ENCODE measurements at regions of chr14 and their contacts with region 1.

Region 1: DNA sequence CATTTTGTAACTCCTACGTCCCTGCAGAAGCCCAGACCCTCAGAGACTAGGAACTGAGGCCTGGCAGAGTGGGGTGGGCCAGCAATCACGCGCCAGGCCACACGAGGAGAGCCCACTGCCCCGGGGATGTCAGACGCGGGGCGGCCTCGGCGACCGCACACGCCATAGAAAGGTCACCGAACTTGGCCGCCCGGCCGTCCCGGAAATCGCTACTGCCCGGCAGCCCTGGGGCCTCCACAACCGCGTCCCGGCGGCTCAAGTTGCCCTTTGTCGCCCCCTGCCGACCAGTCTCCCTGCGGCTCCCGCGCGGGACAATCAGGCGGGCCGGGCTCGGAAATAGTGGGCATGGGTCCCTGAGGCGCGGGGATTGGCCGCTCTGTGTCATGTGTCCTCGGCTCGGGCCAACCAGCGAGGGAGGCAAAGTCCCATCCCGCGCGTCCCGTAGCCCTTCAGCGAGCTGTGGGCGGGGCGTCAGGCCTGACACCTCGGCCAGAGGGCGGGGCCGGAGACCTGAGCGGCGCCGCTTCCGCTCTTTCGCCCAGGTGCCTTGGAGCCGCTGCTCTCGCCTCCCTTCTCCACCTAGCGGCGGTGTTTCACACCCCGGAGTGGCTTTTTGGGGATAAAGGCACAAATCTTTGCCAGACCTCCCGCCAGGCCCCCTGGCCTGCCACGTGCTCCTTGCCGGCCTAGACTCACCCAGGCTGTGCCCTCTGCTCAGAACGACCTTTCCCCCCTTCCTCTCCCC is 33.4 kb upstream of the DEGS2 start:
- DNase-seq: peak; percentile 100
- ATAC-seq: peak; percentile 98
- H3K4me3 ChIP-seq: peak overlapping the region; percentile 3 to 63 (median 52)
- H3K4me3 Mint-ChIP-seq: peak overlapping the region; percentile 76
- H3K27ac ChIP-seq: peak overlapping the region; percentile 88
- H3K27ac Mint-ChIP-seq: peak overlapping the region; percentile 96
- H3K4me1 ChIP-seq: peaks cover 10 to 14% of the 10 kb centered on the region in 2 donors
- H3K4me1 Mint-ChIP-seq: peaks cover 9% of the 10 kb centered on the region
- H3K27me3 ChIP-seq: no peaks in the 10 kb centered on the region
- H3K27me3 Mint-ChIP-seq: no peaks in the 10 kb centered on the region
- CTCF ChIP-seq: peak; percentile 94

Region 2: DNA sequence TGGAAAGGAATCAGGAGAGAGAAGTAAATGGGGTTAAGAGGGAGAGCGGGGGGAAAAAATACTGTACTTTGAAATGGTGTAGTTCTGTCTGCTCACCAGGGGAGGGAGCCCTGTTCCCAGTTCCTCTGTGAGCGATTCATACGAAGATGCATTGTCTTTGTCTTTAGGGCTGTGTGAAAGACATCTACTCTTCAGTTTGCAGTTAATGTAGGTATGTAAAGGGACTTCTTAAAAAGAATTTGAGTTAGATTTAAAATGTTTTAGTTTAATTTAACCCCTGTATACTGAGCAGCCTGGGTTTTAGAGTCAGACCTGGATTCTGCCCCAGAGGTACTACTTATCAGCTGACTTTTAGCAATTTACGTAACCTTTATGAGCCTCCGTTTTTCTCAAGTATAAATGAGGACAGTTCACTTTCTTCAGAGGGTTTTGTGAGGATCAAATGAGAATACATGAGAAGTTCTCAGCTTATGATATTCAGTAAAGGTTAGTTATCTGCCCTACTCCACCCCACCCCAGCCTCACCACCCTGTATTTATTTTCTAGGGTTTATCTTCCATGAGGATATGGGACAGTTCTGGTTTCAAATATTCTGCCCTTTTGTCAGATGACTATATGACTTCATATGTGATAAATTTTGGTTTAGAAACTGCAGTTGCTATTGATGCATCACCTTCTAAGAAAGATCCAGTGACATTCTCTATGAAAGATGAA is 210.2 kb before region 1 on chr14:
- CTCF ChIA-PET with region 1: interaction called, 85 read pairs
- POLR2A ChIA-PET with region 1: interaction called, 6 read pairs
- intact Hi-C with region 1: loop called (anchors 1 kb)
- DNase-seq: peak; percentile 74
- ATAC-seq: peak; percentile 99
- H3K4me3 ChIP-seq: no peak overlapping the region
- H3K4me3 Mint-ChIP-seq: no peak overlapping the region
- H3K27ac ChIP-seq: no peak overlapping the region
- H3K27ac Mint-ChIP-seq: no peak overlapping the region
- H3K4me1 ChIP-seq: no peaks in the 10 kb centered on the region
- H3K4me1 Mint-ChIP-seq: no peaks in the 10 kb centered on the region
- H3K27me3 ChIP-seq: no peaks in the 10 kb centered on the region
- H3K27me3 Mint-ChIP-seq: no peaks in the 10 kb centered on the region
- CTCF ChIP-seq: peak; percentile 96

Region 3: DNA sequence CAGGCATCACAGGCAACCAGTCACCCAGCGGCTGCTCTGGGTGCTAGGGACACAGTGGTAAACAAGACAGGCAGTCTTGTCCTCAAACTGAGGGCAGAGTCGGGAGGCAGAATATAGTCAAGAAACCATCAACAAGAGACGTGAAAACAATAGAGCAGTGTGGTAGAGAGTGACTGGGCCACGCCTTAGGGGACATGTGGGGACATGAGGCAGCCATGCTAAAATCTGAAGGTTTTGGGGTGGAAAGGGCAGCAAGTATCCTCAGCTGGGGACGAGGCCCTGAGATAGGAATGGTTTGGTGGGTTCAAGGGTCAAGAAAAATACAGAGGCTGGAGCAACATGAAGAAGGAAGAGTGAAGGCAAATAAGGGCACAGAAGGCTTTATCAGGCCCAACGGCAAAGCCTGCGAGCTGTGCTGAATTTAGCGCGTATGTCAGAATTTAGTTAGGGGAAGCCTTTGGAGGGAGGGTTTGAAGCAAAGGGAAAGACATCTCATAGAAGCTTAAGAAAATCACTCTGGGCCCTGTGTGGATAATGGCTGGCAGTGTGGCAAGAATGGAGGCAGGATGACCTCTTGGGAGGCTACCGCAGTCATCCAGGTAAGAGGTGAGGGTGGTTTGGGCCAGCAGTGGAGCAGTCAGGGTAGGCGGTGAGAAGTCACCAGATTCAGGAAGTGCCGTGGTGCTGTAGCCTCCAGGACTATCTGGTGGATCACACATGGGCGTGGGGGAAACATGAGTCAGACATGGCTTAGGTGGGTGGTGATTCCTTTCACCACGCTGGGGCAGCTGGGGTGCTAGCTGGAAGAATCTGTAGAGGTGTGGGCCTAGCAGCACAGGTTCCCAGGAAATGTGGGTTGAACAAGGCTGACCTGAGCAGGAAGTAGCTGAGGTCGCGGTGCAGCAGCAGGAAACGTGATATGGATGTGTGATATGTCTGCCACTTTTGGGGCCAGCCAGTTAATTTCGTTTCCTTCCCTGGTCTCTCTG is 124.6 kb before region 1 on chr14:
- CTCF ChIA-PET with region 1: interaction called, 58 read pairs
- POLR2A ChIA-PET with region 1: interaction called, 4 read pairs
- intact Hi-C with region 1: loop called (anchors 2 kb)
- DNase-seq: peak; percentile 80
- ATAC-seq: peak; percentile 41
- H3K4me3 ChIP-seq: peak overlapping the region; percentile 61 to 92 (median 69)
- H3K4me3 Mint-ChIP-seq: peak overlapping the region; percentile 100
- H3K27ac ChIP-seq: peak overlapping the region; percentile 79 to 87
- H3K27ac Mint-ChIP-seq: peak overlapping the region; percentile 98
- H3K4me1 ChIP-seq: peaks cover 77 to 86% of the 10 kb centered on the region in 2 donors
- H3K4me1 Mint-ChIP-seq: peaks cover 93% of the 10 kb centered on the region
- H3K27me3 ChIP-seq: no peaks in the 10 kb centered on the region
- H3K27me3 Mint-ChIP-seq: no peaks in the 10 kb centered on the region
- CTCF ChIP-seq: no peak

Region 4: GRCh38 chr14:100147181-100147631 is 45.6 kb before region 1 on chr14:
- CTCF ChIA-PET with region 1: interaction called, 32 read pairs
- POLR2A ChIA-PET with region 1: no interaction called
- intact Hi-C with region 1: loop called (anchors 1 kb)
- DNase-seq: peak; percentile 71
- ATAC-seq: peak; percentile 74
- H3K4me3 ChIP-seq: peak overlapping the region in 1 of 5 experiments; percentile 25
- H3K4me3 Mint-ChIP-seq: peak overlapping the region; percentile 78
- H3K27ac ChIP-seq: no peak overlapping the region
- H3K27ac Mint-ChIP-seq: peak overlapping the region; percentile 92
- H3K4me1 ChIP-seq: peaks cover 22 to 24% of the 10 kb centered on the region in 2 donors
- H3K4me1 Mint-ChIP-seq: peaks cover 27% of the 10 kb centered on the region
- H3K27me3 ChIP-seq: no peaks in the 10 kb centered on the region
- H3K27me3 Mint-ChIP-seq: no peaks in the 10 kb centered on the region
- CTCF ChIP-seq: no peak

Region 5: GRCh38 chr14:100165831-100166440 is 26.9 kb before region 1 on chr14:
- CTCF ChIA-PET with region 1: interaction called, 11 read pairs
- POLR2A ChIA-PET with region 1: interaction called, 4 read pairs
- intact Hi-C with region 1: loop called (anchors 1 kb)
- DNase-seq: no peak
- ATAC-seq: peak; percentile 48
- H3K4me3 ChIP-seq: peak overlapping the region in 4 of 5 experiments; percentile 37 to 83 (median 57)
- H3K4me3 Mint-ChIP-seq: peak overlapping the region; percentile 90
- H3K27ac ChIP-seq: peak overlapping the region in 1 of 2 donors; percentile 30
- H3K27ac Mint-ChIP-seq: peak overlapping the region; percentile 92
- H3K4me1 ChIP-seq: peaks cover 9 to 25% of the 10 kb centered on the region in 2 donors
- H3K4me1 Mint-ChIP-seq: peaks cover 11% of the 10 kb centered on the region
- H3K27me3 ChIP-seq: no peaks in the 10 kb centered on the region
- H3K27me3 Mint-ChIP-seq: peaks cover 3% of the 10 kb centered on the region
- CTCF ChIP-seq: no peak

Region 6: GRCh38 chr14:100221533-100222223 is 28.8 kb after region 1 on chr14:
- CTCF ChIA-PET with region 1: interaction called, 37 read pairs
- POLR2A ChIA-PET with region 1: interaction called, 3 read pairs
- intact Hi-C with region 1: no loop called
- DNase-seq: peak; percentile 73
- ATAC-seq: peak; percentile 98
- H3K4me3 ChIP-seq: peak overlapping the region; percentile 64 to 92 (median 78)
- H3K4me3 Mint-ChIP-seq: no peak overlapping the region
- H3K27ac ChIP-seq: peak overlapping the region; percentile 59 to 65
- H3K27ac Mint-ChIP-seq: no peak overlapping the region
- H3K4me1 ChIP-seq: peaks cover 28 to 38% of the 10 kb centered on the region in 2 donors
- H3K4me1 Mint-ChIP-seq: peaks cover 19% of the 10 kb centered on the region
- H3K27me3 ChIP-seq: no peaks in the 10 kb centered on the region
- H3K27me3 Mint-ChIP-seq: no peaks in the 10 kb centered on the region
- CTCF ChIP-seq: no peak

Region 7: GRCh38 chr14:100285021-100285912 is 92.4 kb after region 1 on chr14:
- CTCF ChIA-PET with region 1: interaction called, 4 read pairs
- POLR2A ChIA-PET with region 1: no interaction called
- intact Hi-C with region 1: loop called (anchors 2 kb)
- DNase-seq: peak; percentile 89
- ATAC-seq: peak; percentile 91
- H3K4me3 ChIP-seq: peak overlapping the region in 4 of 5 experiments; percentile 74 to 89 (median 82)
- H3K4me3 Mint-ChIP-seq: peak overlapping the region; percentile 84
- H3K27ac ChIP-seq: peak overlapping the region; percentile 80 to 90
- H3K27ac Mint-ChIP-seq: peak overlapping the region; percentile 79
- H3K4me1 ChIP-seq: peaks cover 12% of the 10 kb centered on the region in 2 donors
- H3K4me1 Mint-ChIP-seq: peaks cover 13% of the 10 kb centered on the region
- H3K27me3 ChIP-seq: no peaks in the 10 kb centered on the region
- H3K27me3 Mint-ChIP-seq: no peaks in the 10 kb centered on the region
- CTCF ChIP-seq: peak; percentile 99

Region 8: DNA sequence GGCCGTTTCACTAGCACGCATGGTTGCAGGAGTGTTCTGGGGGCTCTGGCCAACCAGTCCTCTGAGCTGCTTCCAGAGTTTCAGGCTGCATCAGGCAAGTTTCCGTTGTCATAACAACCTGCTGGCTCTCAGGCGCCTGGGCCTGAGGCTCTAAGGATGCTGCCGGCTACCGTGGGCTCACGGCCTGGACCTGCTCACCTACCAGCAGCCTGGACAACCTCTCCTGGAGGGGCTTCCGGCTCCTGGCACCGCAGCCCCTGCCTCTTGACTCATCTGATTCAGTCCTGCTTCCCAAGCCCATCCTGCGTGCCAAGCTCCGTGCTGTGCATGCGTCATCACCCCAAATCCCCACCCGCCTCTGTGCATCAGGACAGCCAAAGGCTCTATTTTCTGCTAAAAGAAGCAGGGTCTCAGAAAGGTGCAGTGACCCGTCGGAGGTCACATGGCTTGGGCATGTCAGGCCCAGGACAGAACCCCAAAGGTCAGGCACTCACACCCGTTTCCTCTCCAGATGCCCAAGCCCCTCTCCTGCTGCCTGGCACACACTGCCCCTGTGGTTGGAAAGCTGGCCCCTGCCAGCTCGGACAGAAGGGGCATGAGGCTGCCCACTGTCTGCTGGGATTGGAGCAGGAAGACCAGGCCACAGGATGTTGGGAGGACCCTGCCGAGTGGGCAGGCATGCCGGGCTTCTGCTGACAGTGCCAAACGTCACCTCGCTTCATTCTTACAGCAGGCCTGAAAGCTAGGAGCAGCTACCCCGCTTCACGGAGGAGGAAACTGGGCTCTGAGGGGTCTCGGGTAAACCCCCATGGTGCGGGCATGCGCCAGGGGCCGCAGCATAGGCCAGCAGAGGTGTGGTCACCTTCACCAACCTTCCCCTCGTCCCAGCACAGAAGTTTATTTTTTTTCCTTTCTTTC is 388.6 kb after region 1 on chr14:
- CTCF ChIA-PET with region 1: no interaction called
- POLR2A ChIA-PET with region 1: no interaction called
- intact Hi-C with region 1: no loop called
- DNase-seq: no peak
- ATAC-seq: no peak
- H3K4me3 ChIP-seq: no peak overlapping the region
- H3K4me3 Mint-ChIP-seq: no peak overlapping the region
- H3K27ac ChIP-seq: no peak overlapping the region
- H3K27ac Mint-ChIP-seq: no peak overlapping the region
- H3K4me1 ChIP-seq: peaks cover 0 to 2% of the 10 kb centered on the region in 2 donors
- H3K4me1 Mint-ChIP-seq: peaks cover 1% of the 10 kb centered on the region
- H3K27me3 ChIP-seq: peaks cover 0 to 10% (median 4%) of the 10 kb centered on the region in 4 experiments
- H3K27me3 Mint-ChIP-seq: peaks cover 10% of the 10 kb centered on the region
- CTCF ChIP-seq: no peak

Region 9: DNA sequence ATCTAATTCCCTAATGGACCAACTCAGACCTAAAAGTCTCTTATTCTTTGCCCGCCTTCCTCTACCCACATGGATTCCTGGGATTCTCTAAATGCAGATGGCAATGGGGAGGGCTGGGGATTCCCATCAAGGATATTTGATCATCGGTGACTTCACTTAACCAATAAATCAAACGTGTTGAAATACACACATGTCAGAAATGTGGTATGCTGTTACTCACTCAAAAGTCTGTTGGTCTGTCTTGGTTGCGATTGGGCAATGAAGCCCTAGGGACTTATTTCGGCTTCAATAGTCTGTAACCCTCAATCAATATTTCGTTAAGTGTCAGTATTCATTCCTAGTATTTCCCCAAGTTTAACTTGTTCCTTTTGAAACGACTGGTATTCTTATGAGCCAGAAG is 1251.3 kb after region 1 on chr14:
- CTCF ChIA-PET with region 1: no interaction called
- POLR2A ChIA-PET with region 1: no interaction called
- intact Hi-C with region 1: no loop called
- DNase-seq: no peak
- ATAC-seq: no peak
- H3K4me3 ChIP-seq: no peak overlapping the region
- H3K4me3 Mint-ChIP-seq: no peak overlapping the region
- H3K27ac ChIP-seq: no peak overlapping the region
- H3K27ac Mint-ChIP-seq: no peak overlapping the region
- H3K4me1 ChIP-seq: no peaks in the 10 kb centered on the region
- H3K4me1 Mint-ChIP-seq: no peaks in the 10 kb centered on the region
- H3K27me3 ChIP-seq: peaks cover 0 to 5% (median 0%) of the 10 kb centered on the region in 4 experiments
- H3K27me3 Mint-ChIP-seq: peaks cover 21% of the 10 kb centered on the region
- CTCF ChIP-seq: no peak

Measured in B cell (primary cell).